ENCODE measurements at regions of chr3 and their contacts with region 1.

Region 1: GRCh38 chr3:181709537-181710279 is 2.0 kb upstream of the SOX2 start:
- DNase-seq: peak; percentile 62
- H3K4me3 ChIP-seq: no peak overlapping the region
- H3K27ac ChIP-seq: no peak overlapping the region
- H3K4me1 ChIP-seq: no peaks in the 10 kb centered on the region
- H3K27me3 ChIP-seq: peaks cover 9% of the 10 kb centered on the region in 2 experiments
- CTCF ChIP-seq: peak; percentile 59 to 66
- POLR2A ChIP-seq: no peak

Region 2: DNA sequence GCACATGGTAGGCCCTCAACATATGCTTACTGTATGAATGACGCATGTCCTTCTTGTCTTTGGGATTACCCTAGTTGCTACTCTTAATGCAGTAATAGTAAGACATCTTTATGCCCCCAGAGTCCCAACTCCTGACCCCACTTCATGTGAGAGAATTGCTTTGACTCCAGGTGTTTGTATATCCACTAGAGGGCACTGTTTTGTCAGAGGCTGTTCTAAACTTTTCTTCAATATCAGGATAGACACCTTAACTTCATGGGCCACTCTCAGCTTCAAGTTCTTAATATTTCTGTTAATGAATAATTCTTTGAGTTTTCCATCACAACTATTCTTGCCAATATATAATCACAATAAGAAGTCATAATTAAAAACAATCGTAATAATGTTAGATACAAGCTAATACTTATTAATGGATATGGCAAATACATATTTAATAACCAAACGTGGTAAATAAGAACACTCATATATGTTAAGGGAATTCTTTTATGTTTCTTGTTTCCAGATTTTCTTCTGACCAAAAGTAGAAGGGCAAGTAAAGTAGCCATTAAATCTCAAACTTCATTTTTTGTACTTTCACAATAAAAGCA is 383.0 kb before region 1 on chr3:
- CTCF ChIA-PET with region 1: interaction called, 17 read pairs
- POLR2A ChIA-PET with region 1: no interaction called
- dilution Hi-C with region 1: no loop called
- intact Hi-C with region 1: no loop called
- DNase-seq: peak; percentile 54
- H3K4me3 ChIP-seq: no peak overlapping the region
- H3K27ac ChIP-seq: no peak overlapping the region
- H3K4me1 ChIP-seq: no peaks in the 10 kb centered on the region
- H3K27me3 ChIP-seq: no peaks in the 10 kb centered on the region
- CTCF ChIP-seq: peak; percentile 54 to 58
- POLR2A ChIP-seq: no peak

Region 3: DNA sequence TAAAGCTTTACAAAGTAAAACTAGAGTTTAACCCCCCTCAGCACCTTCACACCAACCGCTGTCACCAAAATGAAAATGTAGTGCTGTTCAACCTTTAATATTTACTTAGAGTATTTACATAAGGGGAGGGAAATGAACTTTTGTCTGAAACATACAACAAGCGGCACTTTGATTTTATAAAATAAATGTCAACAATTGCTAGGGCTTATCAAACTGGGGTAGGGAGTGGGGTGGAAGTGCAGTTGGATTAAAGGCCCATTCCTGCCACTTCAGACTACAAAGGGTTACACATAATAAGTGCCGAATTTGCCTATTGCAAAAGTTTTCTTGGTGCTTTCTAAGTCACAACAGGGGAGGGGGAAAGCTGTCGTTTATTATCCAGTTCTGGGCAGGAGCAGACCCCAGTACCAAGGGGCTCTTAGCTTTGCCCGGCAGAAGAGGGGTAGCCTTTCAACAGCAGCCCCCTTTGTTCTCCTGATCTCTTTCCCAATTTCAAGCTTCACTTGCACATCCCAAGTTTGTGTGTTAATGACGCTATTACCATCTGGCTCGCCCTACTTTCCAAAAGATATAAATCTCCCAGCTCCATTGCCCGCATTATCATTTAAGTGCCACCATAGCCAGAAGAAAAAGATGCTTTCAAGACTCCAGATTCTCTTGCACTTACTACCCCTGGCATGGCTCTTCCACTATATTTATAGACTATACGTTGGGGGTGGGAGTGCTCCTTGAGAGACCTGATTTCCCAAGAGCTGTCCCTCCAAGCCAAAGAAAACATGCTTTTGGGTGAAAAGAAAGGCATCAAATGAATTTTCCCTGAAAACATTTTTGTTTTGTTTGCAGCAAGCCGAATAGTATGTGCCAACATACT is 19.0 kb after region 1 on chr3:
- CTCF ChIA-PET with region 1: no interaction called
- POLR2A ChIA-PET with region 1: no interaction called
- dilution Hi-C with region 1: no loop called
- intact Hi-C with region 1: no loop called
- DNase-seq: no peak
- H3K4me3 ChIP-seq: no peak overlapping the region
- H3K27ac ChIP-seq: no peak overlapping the region
- H3K4me1 ChIP-seq: no peaks in the 10 kb centered on the region
- H3K27me3 ChIP-seq: peaks cover 20 to 21% of the 10 kb centered on the region in 2 experiments
- CTCF ChIP-seq: no peak
- POLR2A ChIP-seq: no peak

Region 4: DNA sequence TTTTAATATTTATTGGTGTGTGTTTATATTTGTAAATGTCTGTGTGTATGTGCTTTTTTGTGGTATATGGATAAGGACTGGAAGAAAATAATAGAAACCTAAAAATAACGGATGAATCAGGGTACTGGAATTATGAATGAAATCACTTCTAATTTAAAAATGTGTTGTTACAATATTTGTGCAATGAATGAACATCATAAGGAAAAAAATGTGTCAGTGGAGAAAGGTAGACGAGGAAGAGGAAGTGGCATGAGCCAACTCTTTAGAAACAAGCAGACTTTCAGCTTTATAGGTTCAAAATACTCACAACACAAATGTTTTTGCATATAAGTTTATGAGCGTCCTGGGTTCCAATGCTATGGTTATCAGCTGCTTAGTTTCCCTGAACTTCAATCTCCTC is 61.4 kb after region 1 on chr3:
- CTCF ChIA-PET with region 1: no interaction called
- POLR2A ChIA-PET with region 1: no interaction called
- dilution Hi-C with region 1: no loop called
- intact Hi-C with region 1: no loop called
- DNase-seq: no peak
- H3K4me3 ChIP-seq: no peak overlapping the region
- H3K27ac ChIP-seq: no peak overlapping the region
- H3K4me1 ChIP-seq: no peaks in the 10 kb centered on the region
- H3K27me3 ChIP-seq: no peaks in the 10 kb centered on the region
- CTCF ChIP-seq: no peak
- POLR2A ChIP-seq: no peak

Region 5: GRCh38 chr3:181782301-181782954 is 72.7 kb after region 1 on chr3:
- CTCF ChIA-PET with region 1: interaction called, 3 read pairs
- POLR2A ChIA-PET with region 1: no interaction called
- dilution Hi-C with region 1: no loop called
- intact Hi-C with region 1: loop called (anchors 2 kb)
- DNase-seq: peak; percentile 58
- H3K4me3 ChIP-seq: peak overlapping the region in 1 of 3 experiments; percentile 22
- H3K27ac ChIP-seq: peak overlapping the region; percentile 67
- H3K4me1 ChIP-seq: peaks cover 10% of the 10 kb centered on the region
- H3K27me3 ChIP-seq: no peaks in the 10 kb centered on the region
- CTCF ChIP-seq: no peak
- POLR2A ChIP-seq: no peak

Region 6: DNA sequence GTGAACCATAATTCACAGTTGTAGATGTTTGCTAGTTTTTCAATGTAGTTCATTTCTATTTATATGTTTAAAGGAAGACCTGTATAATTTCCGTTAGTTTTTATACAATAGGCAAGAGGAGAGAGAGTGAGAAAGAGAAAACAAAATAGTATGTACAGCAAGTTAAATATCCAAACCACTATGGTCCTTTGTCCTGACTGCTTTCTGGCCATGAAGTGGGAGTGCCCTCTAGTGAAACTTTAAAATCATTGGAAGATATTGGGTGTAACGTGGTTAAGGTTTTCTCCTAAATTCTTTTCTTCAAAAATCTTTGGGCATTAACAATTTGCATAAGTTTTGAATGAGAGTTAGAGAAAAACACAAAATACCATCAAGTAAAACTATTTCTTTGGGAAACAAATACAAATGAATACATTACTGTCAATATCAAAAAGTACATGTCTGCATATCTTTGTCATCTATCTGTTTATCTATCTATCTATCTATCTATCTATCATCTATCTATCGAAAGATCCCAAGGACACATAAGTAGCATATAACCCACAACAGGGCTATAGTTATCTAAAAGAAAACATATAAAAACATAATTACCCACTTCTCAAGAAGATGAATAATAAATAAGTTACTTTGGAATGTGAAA is 549.0 kb after region 1 on chr3:
- CTCF ChIA-PET with region 1: interaction called, 6 read pairs
- POLR2A ChIA-PET with region 1: no interaction called
- dilution Hi-C with region 1: no loop called
- intact Hi-C with region 1: loop called (anchors 1 kb)
- DNase-seq: peak; percentile 40
- H3K4me3 ChIP-seq: no peak overlapping the region
- H3K27ac ChIP-seq: no peak overlapping the region
- H3K4me1 ChIP-seq: no peaks in the 10 kb centered on the region
- H3K27me3 ChIP-seq: no peaks in the 10 kb centered on the region
- CTCF ChIP-seq: peak; percentile 22 to 37
- POLR2A ChIP-seq: no peak

Region 7: GRCh38 chr3:182618085-182618732 is 908.5 kb after region 1 on chr3:
- CTCF ChIA-PET with region 1: interaction called, 4 read pairs
- POLR2A ChIA-PET with region 1: no interaction called
- dilution Hi-C with region 1: no loop called
- intact Hi-C with region 1: loop called (anchors 1 kb)
- DNase-seq: peak; percentile 18
- H3K4me3 ChIP-seq: no peak overlapping the region
- H3K27ac ChIP-seq: no peak overlapping the region
- H3K4me1 ChIP-seq: no peaks in the 10 kb centered on the region
- H3K27me3 ChIP-seq: peaks cover 0 to 4% of the 10 kb centered on the region in 2 experiments
- CTCF ChIP-seq: peak in 1 of 2 donors; percentile 2
- POLR2A ChIP-seq: no peak